Activated CD4-positive, alpha-beta memory T cell treated with anti-CD3 and anti-CD28 coated beads for 36 hours (primary cell): ENCODE measurements at regions of chr2 and their contacts with region 1.

Region 1: DNA sequence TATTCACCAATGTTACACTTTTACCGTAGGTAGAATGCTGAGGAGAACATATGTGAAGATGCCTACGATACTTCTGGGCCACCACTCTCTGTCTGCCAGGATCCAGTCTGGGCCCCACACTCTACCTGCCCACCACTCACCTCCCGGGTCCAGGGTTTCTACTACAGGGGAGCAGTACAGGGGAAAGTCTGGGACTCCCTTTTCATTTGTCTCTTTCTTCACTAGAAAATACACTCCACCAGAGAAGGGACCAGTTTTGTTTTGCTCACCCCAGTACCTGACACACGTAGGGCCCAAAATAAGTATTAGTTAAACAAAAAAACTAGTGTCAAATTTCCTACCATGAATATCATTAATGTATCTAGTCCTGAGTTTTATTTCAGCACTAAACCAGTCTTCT is 21.1 kb downstream of the KANSL3 start:
- DNase-seq: no peak
- H3K4me3 Mint-ChIP-seq: no peak overlapping the region
- H3K27ac Mint-ChIP-seq: peak overlapping the region; percentile 88
- H3K4me1 Mint-ChIP-seq: peaks cover 17% of the 10 kb centered on the region
- H3K27me3 Mint-ChIP-seq: no peaks in the 10 kb centered on the region

Region 2: DNA sequence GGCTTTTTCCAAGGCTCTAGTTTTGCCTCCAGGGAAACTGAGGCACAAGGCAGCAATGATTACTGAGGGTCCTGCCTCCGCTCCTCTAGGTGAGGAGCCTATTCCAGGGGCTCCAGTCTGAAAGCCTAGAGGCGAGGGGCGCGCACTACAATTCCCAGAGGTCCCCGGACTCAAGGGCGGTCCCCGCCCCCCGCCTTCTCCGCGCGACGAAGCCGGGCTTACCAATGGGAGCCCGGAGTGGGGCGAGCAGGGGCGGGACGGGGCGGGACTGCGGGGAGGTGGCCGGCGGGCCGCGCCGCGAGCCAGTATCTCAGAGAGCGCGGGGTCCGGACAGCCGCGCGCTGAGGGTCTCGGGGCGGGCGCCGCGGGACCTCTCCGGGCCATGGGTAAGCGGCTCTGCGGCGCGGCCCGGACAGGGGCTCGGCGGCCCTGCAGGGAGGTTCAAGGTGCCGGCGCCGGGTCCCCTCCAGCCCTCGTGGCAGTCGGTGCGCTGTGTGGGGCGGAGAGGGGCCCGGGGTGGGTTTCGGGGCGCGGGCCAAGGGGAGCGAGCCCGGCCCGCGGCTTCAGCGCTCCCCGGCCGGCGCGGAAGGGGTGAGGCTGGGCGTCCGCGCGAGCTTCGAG is 80.5 kb before region 1 on chr2 and contains the start of gene ARID5A:
- CTCF ChIA-PET with region 1: no interaction called
- POLR2A ChIA-PET with region 1: no interaction called
- intact Hi-C with region 1: no loop called
- DNase-seq: peak; percentile 95
- H3K4me3 Mint-ChIP-seq: peak within 1 kb of the TSS; percentile 95
- H3K27ac Mint-ChIP-seq: peak within 1 kb of the TSS; percentile 98
- H3K4me1 Mint-ChIP-seq: peaks cover 62% of the 10 kb centered on the region
- H3K27me3 Mint-ChIP-seq: no peaks in the 10 kb centered on the region
- total RNA-seq, gene ARID5A: 260 to 266 TPM

Region 3: GRCh38 chr2:96580771-96581170 is 36.2 kb before region 1 on chr2:
- CTCF ChIA-PET with region 1: no interaction called
- POLR2A ChIA-PET with region 1: no interaction called
- intact Hi-C with region 1: no loop called
- DNase-seq: peak; percentile 42
- H3K4me3 Mint-ChIP-seq: no peak overlapping the region
- H3K27ac Mint-ChIP-seq: no peak overlapping the region
- H3K4me1 Mint-ChIP-seq: no peaks in the 10 kb centered on the region
- H3K27me3 Mint-ChIP-seq: no peaks in the 10 kb centered on the region

Region 4: DNA sequence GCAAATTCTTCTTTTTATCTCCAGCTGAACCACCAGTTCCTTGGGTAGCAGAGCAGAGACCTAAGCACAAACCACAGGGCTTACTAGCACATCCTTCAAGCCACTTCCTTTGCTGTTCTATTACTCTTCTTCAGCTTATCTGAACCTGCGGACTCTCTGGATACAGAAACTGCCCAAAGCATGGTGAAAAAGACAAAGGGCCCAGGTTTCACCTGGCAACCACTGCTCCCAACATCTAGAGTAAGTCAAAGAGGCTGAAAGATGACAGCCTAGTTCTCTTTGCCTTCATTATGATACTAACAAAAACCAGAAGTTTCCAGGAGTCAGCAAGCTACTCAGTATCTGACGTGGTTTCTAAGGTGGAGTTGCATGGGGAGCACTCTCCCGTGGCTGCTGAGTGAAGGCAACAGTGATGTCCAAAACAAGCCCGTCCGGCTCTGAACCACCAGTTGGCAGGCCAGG is 22.3 kb before region 1 on chr2:
- CTCF ChIA-PET with region 1: no interaction called
- POLR2A ChIA-PET with region 1: no interaction called
- intact Hi-C with region 1: loop called (anchors 1 kb)
- DNase-seq: peak; percentile 53
- H3K4me3 Mint-ChIP-seq: no peak overlapping the region
- H3K27ac Mint-ChIP-seq: peak overlapping the region; percentile 96
- H3K4me1 Mint-ChIP-seq: peaks cover 41% of the 10 kb centered on the region
- H3K27me3 Mint-ChIP-seq: no peaks in the 10 kb centered on the region

Region 5: DNA sequence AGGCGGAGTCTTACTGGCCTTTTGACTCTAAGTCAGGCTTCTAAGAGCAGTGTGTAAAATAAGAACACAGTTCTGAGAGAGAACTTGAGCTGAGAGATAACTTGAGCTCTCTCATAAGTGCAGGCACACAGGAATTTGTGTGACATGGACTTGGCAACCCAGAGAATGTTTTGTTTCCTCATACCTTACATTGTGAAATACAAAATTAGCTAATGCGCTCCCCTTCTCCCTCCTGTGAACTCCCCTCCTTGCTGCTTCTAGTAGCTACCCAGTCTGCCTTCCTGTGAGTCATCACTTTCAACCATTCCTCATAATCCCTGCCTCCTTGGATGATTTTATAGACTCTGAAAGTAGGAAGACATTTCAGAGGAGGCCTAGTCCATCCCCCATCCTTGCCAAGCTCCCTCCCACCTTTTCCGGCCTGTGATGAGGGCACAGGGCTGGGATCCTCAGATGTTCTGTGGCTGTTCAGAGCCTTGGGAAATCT is 48.1 kb after region 1 on chr2:
- CTCF ChIA-PET with region 1: no interaction called
- POLR2A ChIA-PET with region 1: no interaction called
- intact Hi-C with region 1: no loop called
- DNase-seq: no peak
- H3K4me3 Mint-ChIP-seq: no peak overlapping the region
- H3K27ac Mint-ChIP-seq: no peak overlapping the region
- H3K4me1 Mint-ChIP-seq: no peaks in the 10 kb centered on the region
- H3K27me3 Mint-ChIP-seq: no peaks in the 10 kb centered on the region